ENCODE measurements at regions of chr5 and their contacts with region 1.

Region 1: GRCh38 chr5:43396762-43397304 is 15.4 kb downstream of the CCL28 start:
- DNase-seq: peak; percentile 41 to 60
- H3K4me3 ChIP-seq: peak overlapping the region; percentile 54 to 72 (median 59)
- H3K27ac ChIP-seq: peak overlapping the region; percentile 59 to 75
- H3K4me1 ChIP-seq: no peaks in the 10 kb centered on the region
- H3K27me3 ChIP-seq: no peaks in the 10 kb centered on the region
- CTCF ChIP-seq: no peak
- POLR2A ChIP-seq: no peak

Region 2: GRCh38 chr5:42949348-42950115 is 447.3 kb before region 1 on chr5:
- intact Hi-C with region 1: loop called (anchors 5 kb)
- DNase-seq: no peak
- H3K4me3 ChIP-seq: peak overlapping the region; percentile 60 to 85 (median 64)
- H3K27ac ChIP-seq: peak overlapping the region; percentile 45 to 95
- H3K4me1 ChIP-seq: no peaks in the 10 kb centered on the region
- H3K27me3 ChIP-seq: peaks cover 0 to 30% of the 10 kb centered on the region in 2 donors
- CTCF ChIP-seq: peak in 2 of 3 donors; percentile 32 to 46
- POLR2A ChIP-seq: no peak

Region 3: DNA sequence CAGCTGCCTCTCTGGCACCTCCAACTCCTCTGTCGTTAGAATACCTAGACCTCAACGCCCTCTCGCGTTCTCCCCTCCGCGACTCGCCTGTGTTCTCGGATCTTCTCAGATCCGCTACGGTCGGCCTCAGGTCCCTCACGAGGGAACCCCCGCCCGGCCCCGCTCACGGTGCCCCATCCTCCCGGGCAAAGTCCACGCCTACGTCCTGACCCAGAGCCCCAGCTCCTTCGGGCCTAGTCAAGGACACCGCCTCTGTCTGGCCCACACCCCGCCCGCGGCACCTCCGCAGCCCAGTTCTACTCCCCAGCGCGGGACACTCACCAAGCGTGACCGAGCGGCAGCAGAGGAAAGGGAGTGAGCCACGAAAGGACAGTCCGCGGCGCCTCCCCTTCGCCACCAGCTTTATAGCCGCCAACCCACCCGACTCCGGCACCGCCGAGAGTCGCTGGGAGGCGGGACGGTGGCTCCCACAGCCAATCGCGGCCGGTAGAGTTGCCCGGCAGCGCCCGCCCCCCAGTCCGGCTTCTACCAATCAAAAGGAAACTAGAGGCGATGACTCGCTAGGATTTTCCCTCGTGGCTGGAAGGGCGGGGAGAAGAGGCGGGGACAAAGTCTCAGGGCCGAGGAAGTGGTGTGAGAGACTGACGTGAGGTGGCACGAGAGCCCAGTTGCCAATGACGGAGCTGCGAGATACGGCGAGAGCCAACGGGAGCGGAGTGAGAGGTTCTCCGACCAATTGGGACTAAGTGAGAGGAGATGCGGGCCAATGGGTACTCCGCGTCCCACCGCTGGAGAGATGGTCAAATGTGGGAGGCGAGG is 83.6 kb before region 1 on chr5 and contains the start of gene HMGCS1:
- intact Hi-C with region 1: no loop called
- DNase-seq: peak; percentile 98 to 99
- H3K4me3 ChIP-seq: peak within 1 kb of the TSS; percentile 78 to 84 (median 80)
- H3K27ac ChIP-seq: peak within 1 kb of the TSS; percentile 86 to 91
- H3K4me1 ChIP-seq: peaks cover 0 to 17% of the 10 kb centered on the region in 2 donors
- H3K27me3 ChIP-seq: no peaks in the 10 kb centered on the region
- CTCF ChIP-seq: no peak
- POLR2A ChIP-seq: peak; percentile 81
- total RNA-seq, gene HMGCS1: 13.9 to 36.6 (median 26.5) TPM

Region 4: DNA sequence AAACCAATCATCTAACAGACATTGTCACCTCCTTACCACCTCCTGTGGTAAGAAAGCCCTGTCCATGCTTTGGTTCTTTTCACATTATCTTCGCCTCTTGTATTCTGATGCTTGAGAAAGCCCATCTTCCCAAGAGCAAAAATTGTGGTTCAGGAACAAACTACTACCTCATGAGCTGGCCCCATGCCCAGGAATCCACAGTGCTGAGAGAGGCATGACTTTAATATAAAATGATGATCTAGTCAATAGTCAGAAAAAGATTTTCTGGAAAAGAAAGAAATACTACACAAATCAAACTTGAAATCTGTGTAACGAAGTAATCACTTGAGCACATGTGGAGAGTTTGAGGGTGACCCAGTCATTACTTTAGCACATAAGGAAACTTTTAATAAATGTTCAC is 897.7 kb after region 1 on chr5:
- intact Hi-C with region 1: no loop called
- DNase-seq: peak in 1 of 2 donors; percentile 54
- H3K4me3 ChIP-seq: no peak overlapping the region
- H3K27ac ChIP-seq: no peak overlapping the region
- H3K4me1 ChIP-seq: no peaks in the 10 kb centered on the region
- H3K27me3 ChIP-seq: no peaks in the 10 kb centered on the region
- CTCF ChIP-seq: no peak
- POLR2A ChIP-seq: no peak